ENCODE measurements at regions of chr1 and their contacts with region 1.

Region 1: GRCh38 chr1:172041742-172042141 is 200.4 kb downstream of the DNM3 start:
- DNase-seq: peak in 1 of 5 donors; percentile 49
- H3K4me3 ChIP-seq: peak overlapping the region; percentile 17
- H3K27ac ChIP-seq: no peak overlapping the region
- H3K4me1 ChIP-seq: no peaks in the 10 kb centered on the region
- H3K27me3 ChIP-seq: no peaks in the 10 kb centered on the region
- CTCF ChIP-seq: peak in 2 of 3 donors; percentile 78 to 87
- EP300 ChIP-seq: no peak
- POLR2A ChIP-seq: no peak

Region 2: DNA sequence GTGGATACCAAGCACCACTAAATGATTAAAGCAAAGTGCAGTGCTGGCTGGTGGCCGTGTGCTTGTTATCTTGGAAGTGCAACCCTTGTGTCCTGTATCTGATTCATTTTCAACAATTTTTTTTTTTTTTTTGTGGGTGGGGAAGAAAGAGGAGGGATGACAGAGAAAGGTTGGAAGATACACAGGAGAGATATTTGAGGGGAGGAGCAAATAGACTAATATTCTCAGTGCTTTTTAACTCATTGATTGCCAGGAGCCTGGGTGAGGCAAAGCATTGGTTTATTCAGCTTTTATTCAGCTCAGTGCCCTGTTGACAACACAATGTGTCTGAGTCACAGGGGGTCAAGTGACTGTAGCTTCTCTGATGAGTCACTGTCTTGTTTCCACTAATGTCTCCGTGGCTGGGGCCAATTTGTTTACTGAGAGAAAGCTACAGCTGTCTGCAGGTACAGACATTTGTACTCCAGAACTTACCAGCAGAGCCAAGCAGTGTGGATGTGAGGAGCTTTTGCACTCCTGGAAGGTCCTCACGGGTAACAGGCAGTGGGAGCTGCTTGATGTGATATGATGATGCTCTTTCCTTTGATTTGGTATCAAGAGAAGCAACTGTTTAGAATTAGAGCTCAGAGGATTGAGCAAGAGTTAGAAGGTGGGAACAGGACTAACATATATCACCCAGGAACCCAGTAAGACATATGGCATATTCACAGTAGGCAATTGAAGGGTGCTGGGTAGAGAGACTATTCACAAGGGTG is 224.1 kb before region 1 on chr1:
- intact Hi-C with region 1: no loop called
- DNase-seq: peak in 1 of 5 donors; percentile 20
- H3K4me3 ChIP-seq: no peak overlapping the region
- H3K27ac ChIP-seq: no peak overlapping the region
- H3K4me1 ChIP-seq: no peaks in the 10 kb centered on the region
- H3K27me3 ChIP-seq: no peaks in the 10 kb centered on the region
- CTCF ChIP-seq: no peak
- EP300 ChIP-seq: no peak
- POLR2A ChIP-seq: no peak

Region 3: DNA sequence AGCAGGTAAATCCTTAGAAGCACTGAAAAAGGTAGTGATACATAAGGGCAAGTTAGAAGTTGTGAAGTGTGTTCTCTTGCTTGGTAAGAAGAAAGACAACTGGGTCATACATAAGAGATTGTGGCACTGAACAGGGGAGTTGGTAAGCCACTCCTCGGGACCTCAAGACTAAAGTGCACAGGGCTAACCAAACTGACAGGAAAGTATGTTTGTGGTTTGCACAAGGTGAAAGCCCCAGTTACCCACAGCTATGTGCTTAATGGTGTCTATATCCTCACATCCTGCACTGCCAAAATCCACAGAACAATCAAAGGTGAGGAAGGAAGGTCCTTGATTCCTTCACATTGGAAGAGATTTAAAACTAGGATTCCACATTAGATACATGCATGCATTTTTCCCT is 76.1 kb after region 1 on chr1:
- intact Hi-C with region 1: no loop called
- DNase-seq: no peak
- H3K4me3 ChIP-seq: no peak overlapping the region
- H3K27ac ChIP-seq: no peak overlapping the region
- H3K4me1 ChIP-seq: peaks cover 7% of the 10 kb centered on the region
- H3K27me3 ChIP-seq: no peaks in the 10 kb centered on the region
- CTCF ChIP-seq: no peak
- EP300 ChIP-seq: no peak
- POLR2A ChIP-seq: no peak

Region 4: GRCh38 chr1:172135076-172135672 is 93.4 kb after region 1 on chr1:
- intact Hi-C with region 1: loop called in 1 of 4 experiments (anchors 10 kb)
- DNase-seq: no peak
- H3K4me3 ChIP-seq: no peak overlapping the region
- H3K27ac ChIP-seq: peak overlapping the region in 1 of 2 donors; percentile 71
- H3K4me1 ChIP-seq: peaks cover 8% of the 10 kb centered on the region
- H3K27me3 ChIP-seq: no peaks in the 10 kb centered on the region
- CTCF ChIP-seq: peak in 2 of 3 donors; percentile 43 to 60
- EP300 ChIP-seq: no peak
- POLR2A ChIP-seq: no peak

Region 5: DNA sequence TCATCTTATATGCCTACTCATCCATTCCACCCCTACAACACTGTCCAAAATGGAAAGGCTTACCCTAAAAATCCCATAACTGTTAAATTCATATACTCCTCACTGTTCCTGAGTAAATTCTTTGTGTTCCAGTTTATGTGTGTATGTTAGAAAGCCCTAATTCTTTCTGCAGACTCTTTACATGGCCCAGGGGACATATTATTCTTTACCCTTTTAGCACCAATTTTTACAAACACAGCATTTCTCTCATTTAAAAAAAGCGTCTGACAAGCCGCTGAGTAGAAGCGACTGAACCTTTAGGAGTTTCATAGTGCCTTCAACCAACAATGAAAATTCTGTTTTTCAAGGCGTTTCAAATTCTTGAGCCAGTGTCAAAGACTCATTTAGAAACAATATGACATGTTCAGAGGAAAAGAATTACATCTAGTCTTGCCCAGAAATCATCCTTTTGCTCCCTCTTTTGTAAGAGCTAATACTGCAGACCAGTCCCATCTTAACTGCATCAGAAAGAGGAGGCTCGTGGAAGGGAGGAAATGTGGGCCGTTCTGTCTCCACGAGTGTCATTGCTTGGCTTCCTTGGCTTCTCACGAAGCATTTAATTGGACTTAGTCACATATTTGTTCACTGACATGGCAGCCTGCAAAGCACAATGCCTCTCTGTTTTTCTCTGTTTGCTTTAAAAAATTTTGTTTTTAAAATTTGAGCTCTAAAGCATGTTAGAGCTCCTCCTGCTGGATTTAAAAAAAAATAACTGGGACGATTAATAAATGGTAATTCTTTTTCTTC is 357.4 kb after region 1 on chr1:
- intact Hi-C with region 1: loop called in 3 of 4 experiments (anchors 2 to 10 kb)
- DNase-seq: peak in 4 of 5 donors; percentile 47 to 78 (median 49)
- H3K4me3 ChIP-seq: peak overlapping the region; percentile 6
- H3K27ac ChIP-seq: peak overlapping the region in 1 of 2 donors; percentile 65
- H3K4me1 ChIP-seq: peaks cover 3% of the 10 kb centered on the region
- H3K27me3 ChIP-seq: no peaks in the 10 kb centered on the region
- CTCF ChIP-seq: peak; percentile 43 to 64 (median 60)
- EP300 ChIP-seq: no peak
- POLR2A ChIP-seq: no peak